Right ventricle myocardium inferior (tissue), 1 donor: ENCODE measurements at regions of chr2 and their contacts with region 1.

Region 1: DNA sequence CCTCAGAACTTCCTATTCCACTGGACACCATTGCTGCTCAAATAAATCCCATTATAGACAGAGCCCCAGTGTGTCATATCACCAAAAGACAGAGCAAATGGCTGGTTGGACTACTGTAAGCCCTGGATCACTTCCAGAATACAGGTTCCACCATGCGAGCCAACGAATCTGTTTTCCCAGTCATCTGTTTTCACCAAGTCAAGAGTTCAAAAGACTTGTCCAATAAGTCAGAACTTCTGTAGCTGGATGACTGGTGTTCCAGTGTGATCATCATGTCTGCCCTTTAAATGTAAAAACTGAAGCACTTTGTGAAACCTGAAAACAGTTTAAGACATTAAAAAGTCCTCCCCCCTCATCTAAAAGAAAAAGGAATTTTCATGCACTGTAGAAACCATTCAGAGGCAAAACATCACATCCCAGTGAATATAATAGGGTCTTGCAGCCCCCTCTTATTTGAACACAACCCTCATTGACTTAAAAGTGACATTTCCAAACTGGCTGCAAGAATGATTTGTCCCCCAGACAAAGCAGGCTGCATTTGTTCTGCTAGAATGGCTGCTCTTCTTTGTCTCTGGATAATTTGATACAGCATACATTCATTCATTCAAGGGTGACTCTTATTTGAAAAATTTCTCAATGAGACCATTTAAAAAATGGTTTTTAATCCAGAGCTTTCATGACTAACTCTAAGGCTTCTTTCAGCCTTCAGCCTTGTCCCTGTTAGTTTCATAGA is 64.6 kb upstream of the TANC1 start:
- DNase-seq: no peak
- ATAC-seq: no peak

Region 2: GRCh38 chr2:158317642-158318041 is 586.2 kb before region 1 on chr2:
- intact Hi-C with region 1: no loop called
- DNase-seq: no peak
- ATAC-seq: no peak

Region 3: DNA sequence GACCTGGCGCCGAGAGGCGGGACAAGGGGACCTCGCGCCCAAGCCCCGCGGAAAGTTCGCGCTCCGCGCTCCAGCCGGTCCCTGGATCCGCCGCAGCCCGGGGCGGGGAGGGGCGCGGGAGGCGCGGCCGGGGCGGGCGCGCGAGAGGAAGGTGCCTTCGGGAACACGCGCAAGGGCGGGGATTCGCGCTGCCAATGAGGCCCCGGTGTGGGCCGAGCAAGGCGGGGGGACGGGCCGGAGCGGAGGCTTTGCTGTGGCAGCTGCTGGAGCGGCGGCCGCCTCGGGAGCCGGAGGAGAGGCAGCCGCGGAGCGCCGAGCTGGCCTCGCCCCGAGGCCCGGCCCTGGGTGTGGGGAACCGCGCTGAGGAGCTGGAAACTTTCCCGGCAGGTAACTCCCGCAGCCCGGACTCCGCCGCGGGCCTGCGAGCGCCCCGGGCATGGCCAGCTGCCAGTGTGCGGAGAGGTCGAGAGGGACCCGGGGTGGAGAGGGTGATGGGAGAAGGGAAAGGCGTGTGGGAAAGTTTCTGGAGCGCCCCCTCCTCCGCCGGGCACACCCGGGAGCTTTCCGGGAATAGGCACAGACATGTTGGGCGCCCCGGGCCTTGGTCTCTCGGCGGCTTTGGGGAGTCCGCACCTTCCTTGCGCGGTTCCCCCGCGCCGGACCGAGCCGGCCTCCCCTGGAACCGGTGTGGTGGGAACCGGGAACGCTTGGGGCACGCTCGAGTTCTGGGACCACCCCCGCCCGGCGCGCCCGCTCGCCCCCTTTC is 64.7 kb after region 1 on chr2 and contains the start of gene TANC1:
- intact Hi-C with region 1: loop called (anchors 5 kb)
- DNase-seq: peak; percentile 94
- ATAC-seq: peak; percentile 98
- total RNA-seq, gene TANC1: 62.4 TPM

Region 4: DNA sequence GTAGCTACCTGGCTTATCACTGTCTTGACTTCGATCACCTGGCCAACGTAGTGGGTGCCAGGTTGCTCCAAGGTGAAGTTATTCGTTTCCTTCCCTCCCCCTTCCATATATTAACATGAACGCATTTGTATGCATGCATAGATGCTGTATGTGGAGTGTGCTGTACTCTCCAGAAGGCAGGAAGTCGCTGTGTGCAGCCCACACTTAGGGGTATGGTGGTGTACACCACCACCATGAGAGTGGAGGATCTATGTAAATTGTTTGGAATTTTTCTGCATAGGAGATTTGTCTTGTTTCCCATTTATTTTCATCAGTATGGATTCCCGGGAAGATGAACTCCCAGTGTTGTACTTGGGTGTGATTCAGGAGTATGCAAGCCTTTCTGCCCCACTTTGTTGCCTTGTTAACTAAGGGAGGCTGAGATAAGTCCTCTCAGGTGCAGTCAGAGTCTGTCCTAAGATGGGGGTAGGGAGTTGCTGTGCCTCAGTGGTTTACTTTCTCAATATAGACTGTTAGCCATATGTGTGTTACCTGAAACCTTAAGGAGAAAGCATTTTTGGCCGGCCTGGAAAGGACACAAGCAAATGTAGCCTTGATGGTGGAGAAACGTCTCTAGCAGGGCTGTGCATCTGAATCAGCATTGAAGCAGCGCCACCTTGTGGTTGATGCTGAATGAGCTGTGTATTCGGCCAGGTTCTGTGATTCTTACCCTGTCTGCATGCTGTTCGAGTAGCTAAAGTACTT is 214.4 kb after region 1 on chr2:
- intact Hi-C with region 1: loop called (anchors 1 kb)
- DNase-seq: peak; percentile 87
- ATAC-seq: peak; percentile 87

Region 5: DNA sequence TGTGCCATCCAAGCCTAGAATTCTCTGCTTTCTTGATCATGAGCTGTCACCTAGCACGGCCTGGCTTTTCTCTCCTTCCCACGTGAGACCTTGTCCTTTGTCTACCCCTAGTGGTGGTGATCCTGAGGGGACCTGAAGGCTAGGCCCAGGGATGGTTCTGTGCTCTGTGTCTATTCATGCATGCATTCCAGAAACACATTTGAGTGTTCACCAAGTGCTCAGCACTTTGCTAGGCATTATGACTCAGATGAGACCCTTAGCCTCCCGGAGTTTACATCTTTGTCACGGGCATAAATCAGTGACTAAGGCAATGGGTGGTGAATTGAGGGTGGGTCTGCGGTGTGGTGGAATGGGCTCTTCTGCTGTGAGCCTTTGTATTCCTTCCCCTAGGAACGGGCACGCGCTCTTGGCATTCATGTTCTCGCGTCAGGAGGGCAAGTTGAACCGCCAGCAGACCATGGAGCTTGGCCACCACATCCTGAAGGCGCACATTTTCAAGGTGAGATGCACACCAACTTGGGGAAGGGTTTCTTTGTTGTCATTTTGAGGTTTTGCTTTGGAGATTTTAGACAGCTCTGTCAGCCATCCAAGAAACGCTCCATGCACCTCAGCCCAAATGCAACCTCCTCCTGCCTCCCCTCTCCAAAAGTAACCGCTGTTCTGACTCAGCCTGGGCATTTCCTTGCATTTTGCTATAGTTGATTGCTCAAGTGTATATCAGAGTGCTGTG is 281.7 kb after region 1 on chr2:
- intact Hi-C with region 1: loop called (anchors 5 kb)
- DNase-seq: no peak
- ATAC-seq: peak; percentile 42